ENCODE measurements at regions of chr10 and their contacts with region 1.

Region 1: DNA sequence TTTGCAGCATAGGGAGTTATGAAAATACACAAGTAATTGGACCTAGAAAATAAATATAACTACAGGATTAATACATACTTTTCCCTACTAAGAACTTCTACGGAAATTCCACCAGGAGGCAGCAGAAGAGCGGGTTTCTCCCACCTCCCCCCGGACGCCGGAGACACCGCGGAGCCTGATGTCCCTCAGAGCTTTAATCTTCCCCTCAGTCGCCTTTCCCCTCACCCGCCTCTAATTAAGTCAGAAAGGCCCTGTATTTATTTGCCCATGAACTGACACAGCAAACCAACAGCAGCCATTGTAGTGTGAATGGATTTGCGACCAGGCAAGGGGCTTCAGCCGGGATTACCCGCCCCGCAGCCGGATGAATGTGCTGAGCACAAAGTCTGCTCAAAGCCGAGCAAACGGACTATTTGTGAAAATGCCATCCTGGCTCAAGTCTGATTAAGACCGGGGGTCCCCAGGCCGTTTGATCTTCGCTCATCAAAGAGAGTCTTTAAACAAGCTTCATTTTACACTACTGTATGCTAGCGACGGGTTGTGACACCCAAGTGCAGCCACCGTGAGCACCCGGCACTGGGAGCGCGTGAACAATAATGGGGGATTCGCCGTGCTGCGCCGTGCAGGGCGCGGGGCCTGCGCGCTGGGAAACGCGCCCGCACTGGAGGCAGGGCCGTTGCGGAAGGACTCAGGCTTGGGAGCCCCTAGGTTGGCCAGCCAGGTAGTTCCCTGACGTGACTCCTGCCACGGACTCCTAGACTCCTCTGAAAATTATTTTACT is 5.6 kb upstream of the DKK1 start:
- DNase-seq: peak; percentile 86
- H3K4me3 ChIP-seq: peak overlapping the region; percentile 9 to 65 (median 55)
- H3K27ac ChIP-seq: peak overlapping the region; percentile 55
- H3K4me1 ChIP-seq: peaks cover 9% of the 10 kb centered on the region
- H3K27me3 ChIP-seq: no peaks in the 10 kb centered on the region
- CTCF ChIP-seq: peak; percentile 61 to 72
- POLR2A ChIP-seq: no peak

Region 2: DNA sequence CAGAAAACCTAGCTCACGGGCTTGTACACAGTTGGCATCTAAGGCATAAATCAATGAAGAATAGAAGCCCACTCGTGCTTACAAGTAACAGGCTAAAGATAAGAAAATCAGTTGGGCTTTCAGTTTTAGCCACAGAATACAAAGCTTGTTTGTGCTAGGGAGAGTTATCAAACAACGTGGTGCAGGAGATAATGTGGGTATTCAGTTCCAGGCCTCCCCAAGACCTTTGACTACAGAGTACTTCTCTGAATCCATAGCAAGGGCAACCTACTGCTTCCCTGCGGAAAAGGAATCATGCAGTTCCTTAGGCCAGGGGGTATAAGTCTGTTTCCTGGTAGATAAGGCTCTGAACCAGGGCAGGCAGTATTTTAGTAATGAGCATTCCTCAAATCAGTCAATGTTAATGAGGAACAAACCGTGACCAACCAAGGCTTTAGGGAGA is 389.5 kb before region 1 on chr10:
- CTCF ChIA-PET with region 1: no interaction called
- POLR2A ChIA-PET with region 1: no interaction called
- dilution Hi-C with region 1: no loop called
- intact Hi-C with region 1: no loop called
- DNase-seq: peak; percentile 96
- H3K4me3 ChIP-seq: no peak overlapping the region
- H3K27ac ChIP-seq: peak overlapping the region; percentile 28
- H3K4me1 ChIP-seq: peaks cover 21% of the 10 kb centered on the region
- H3K27me3 ChIP-seq: no peaks in the 10 kb centered on the region
- CTCF ChIP-seq: no peak
- POLR2A ChIP-seq: peak; percentile 78

Region 3: DNA sequence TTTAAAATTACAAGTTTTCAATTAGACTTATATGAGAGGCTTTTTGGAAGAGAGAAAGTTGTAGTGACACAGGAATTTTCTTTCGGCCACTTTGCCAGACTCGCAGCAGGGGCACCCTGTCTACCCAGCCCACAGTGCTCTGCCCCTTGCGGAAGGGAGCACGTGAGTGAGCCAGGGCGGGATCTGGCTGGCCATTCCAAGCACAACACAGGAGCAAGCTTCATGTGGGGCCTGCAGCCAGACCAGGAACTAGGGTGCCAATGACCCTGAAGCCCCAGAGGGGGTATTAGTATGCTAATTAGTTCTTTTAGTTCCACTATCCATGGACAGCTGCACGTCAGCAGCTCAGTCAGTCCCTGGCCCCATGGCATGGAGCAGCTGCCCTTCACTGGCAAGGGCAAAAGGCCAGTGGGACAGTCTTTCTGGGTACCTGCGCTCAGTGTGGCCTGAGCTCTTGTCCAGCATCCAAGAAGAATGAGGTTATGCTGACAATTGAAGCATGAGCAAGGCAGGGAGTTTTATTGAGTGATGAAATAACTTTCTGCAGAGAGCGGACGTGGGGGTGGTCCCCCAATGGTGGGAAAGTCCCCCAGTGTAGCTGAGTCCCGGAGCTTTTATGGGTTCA is 358.0 kb before region 1 on chr10:
- CTCF ChIA-PET with region 1: no interaction called
- POLR2A ChIA-PET with region 1: no interaction called
- dilution Hi-C with region 1: no loop called
- intact Hi-C with region 1: no loop called
- DNase-seq: no peak
- H3K4me3 ChIP-seq: no peak overlapping the region
- H3K27ac ChIP-seq: no peak overlapping the region
- H3K4me1 ChIP-seq: no peaks in the 10 kb centered on the region
- H3K27me3 ChIP-seq: no peaks in the 10 kb centered on the region
- CTCF ChIP-seq: no peak
- POLR2A ChIP-seq: no peak

Region 4: DNA sequence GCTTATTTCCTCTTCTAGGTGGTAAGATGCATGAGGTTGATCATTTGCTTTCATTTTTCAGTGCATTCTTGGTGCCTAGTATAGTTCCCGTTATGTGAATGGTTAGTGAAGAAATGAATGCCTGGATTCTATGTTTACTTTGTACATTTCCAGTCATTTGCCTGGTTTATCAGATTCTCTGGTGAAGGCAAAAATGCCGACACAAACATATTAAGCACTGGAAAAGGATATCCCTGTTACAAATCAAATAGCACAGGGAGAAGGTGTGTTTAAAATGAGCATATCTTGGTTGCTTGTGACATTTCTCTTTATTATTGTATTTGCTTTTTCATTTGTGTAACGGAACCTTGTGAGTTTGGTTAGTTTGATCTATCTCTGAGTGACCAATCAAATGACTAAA is 252.9 kb after region 1 on chr10:
- CTCF ChIA-PET with region 1: interaction called, 279 read pairs
- POLR2A ChIA-PET with region 1: no interaction called
- dilution Hi-C with region 1: no loop called
- intact Hi-C with region 1: no loop called
- DNase-seq: no peak
- H3K4me3 ChIP-seq: no peak overlapping the region
- H3K27ac ChIP-seq: no peak overlapping the region
- H3K4me1 ChIP-seq: peaks cover 7% of the 10 kb centered on the region
- H3K27me3 ChIP-seq: no peaks in the 10 kb centered on the region
- CTCF ChIP-seq: no peak
- POLR2A ChIP-seq: no peak

Region 5: DNA sequence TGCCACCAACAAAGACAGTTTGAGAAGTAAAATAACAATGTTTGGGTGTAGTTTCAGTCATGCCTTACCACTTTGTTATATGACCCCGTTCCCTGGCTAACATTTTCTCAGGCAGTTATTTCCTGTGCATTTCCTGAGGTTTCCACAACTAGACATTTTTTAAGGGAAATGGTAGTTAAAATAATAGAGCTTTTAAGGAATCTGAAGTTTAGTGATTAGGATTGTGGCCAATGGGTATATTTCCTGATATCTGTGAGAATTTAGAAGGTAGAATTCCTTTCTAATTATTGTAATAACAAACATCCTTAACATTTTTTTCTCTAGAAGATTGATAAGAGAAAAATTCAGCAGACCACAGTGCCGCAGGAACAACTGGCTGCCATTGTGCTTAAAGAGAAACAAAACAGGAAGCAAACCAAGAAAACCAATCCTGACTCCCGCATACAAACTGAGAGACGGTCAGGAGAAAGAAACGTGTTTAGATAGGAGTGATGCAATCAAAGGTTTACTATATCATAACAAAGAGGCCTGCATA is 270.5 kb after region 1 on chr10:
- CTCF ChIA-PET with region 1: interaction called, 9 read pairs
- POLR2A ChIA-PET with region 1: interaction called, 3 read pairs
- dilution Hi-C with region 1: no loop called
- intact Hi-C with region 1: loop called (anchors 1 kb)
- DNase-seq: peak; percentile 96
- H3K4me3 ChIP-seq: peak overlapping the region in 1 of 3 experiments; percentile 40
- H3K27ac ChIP-seq: peak overlapping the region; percentile 91
- H3K4me1 ChIP-seq: peaks cover 41% of the 10 kb centered on the region
- H3K27me3 ChIP-seq: no peaks in the 10 kb centered on the region
- CTCF ChIP-seq: no peak
- POLR2A ChIP-seq: no peak

Region 6: DNA sequence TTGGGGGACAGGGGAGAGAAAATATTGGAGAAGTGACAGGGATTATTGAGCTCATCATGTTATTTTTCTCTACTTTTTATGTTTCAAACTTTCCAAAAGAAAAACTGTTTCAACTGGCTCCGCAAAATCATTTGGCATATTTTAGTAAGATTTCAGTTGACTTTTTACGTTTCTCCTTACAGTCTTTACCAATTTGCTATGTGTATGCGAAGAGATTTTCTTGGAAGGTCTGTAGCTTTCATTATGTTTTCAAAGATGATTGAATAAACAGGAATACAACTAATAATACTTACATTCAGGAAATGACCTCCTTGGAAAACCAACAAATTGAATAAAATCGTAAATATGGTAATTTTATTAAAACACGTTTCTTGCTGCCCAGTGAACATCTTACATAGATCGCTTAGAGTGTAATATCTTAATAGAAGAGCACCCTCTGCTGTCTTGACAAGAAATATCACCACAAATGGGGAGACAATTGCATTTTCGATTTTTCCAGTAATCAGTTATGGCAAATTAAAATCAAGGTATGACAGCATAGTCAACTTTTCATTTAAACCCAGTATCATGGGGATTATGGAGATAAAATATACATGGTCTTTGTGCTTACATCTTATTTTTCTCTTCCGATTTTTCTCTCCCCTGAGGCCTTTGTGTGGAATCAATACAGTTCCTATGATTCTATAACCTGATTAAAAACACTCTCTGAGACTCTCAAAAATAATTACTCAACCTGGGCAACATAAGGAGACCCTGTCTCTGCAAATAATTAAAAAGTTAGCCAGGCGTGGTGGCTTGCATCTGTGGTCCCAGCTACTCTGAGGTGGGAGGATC is 421.0 kb after region 1 on chr10:
- CTCF ChIA-PET with region 1: interaction called, 26 read pairs
- POLR2A ChIA-PET with region 1: no interaction called
- dilution Hi-C with region 1: no loop called
- intact Hi-C with region 1: loop called (anchors 1 kb)
- DNase-seq: peak; percentile 66
- H3K4me3 ChIP-seq: no peak overlapping the region
- H3K27ac ChIP-seq: no peak overlapping the region
- H3K4me1 ChIP-seq: peaks cover 3% of the 10 kb centered on the region
- H3K27me3 ChIP-seq: no peaks in the 10 kb centered on the region
- CTCF ChIP-seq: peak; percentile 30 to 39
- POLR2A ChIP-seq: no peak